ENCODE measurements at regions of chr7 and their contacts with region 1.

Region 1: GRCh38 chr7:148527707-148528168 is 62.8 kb upstream of the C7orf33 start:
- DNase-seq: peak; percentile 95
- H3K4me3 Mint-ChIP-seq: no peak overlapping the region
- H3K27ac Mint-ChIP-seq: no peak overlapping the region
- H3K4me1 Mint-ChIP-seq: peaks cover 7% of the 10 kb centered on the region
- H3K27me3 Mint-ChIP-seq: peaks cover 39% of the 10 kb centered on the region

Region 2: DNA sequence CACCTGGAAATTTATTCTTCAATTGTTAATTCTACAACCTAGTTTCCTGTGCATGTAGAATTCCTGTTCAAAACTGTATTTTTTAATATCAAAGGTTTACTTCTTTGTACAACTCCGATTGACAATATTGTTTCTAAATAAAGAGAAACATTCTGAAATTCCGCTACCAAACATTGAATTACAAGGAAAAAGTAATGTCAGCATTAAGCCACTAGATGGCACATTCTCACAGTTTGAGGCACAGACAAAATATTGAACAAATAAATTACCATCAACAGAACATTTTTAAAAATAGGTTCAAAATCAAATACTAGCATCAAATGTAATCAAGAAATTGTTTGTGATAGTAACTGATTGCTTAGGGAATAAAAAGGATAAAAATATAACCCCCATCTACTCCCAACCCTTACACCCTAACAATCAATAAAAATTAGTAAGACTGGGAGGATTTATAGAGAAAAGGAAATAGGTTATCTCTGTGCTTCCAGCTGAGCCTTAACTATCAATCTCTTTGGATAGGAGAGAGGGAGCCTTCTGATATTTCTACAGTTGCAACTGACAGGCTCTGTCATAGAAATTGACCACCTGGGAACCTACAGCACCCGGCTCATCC is 23.8 kb before region 1 on chr7:
- intact Hi-C with region 1: loop called (anchors 1 kb)
- DNase-seq: peak; percentile 64
- H3K4me3 Mint-ChIP-seq: no peak overlapping the region
- H3K27ac Mint-ChIP-seq: no peak overlapping the region
- H3K4me1 Mint-ChIP-seq: peaks cover 8% of the 10 kb centered on the region
- H3K27me3 Mint-ChIP-seq: peaks cover 21% of the 10 kb centered on the region

Measured in activated CD4-positive, alpha-beta T cell treated with anti-CD3 and anti-CD28 coated beads, Interleukin-2, amount 10 ng/mL, durations not matched to agents 24 days and 14 days (primary cell).